ENCODE measurements at regions of chr3 and their contacts with region 1.

Region 1: GRCh38 chr3:187319699-187320302 is 28.3 kb upstream of the MASP1 start:
- DNase-seq: peak; percentile 72 to 94
- H3K4me3 ChIP-seq: no peak overlapping the region
- H3K27ac ChIP-seq: no peak overlapping the region
- H3K4me1 ChIP-seq: peaks cover 0 to 4% (median 2%) of the 10 kb centered on the region in 4 experiments; a peak in 4 of 7 replicates
- H3K27me3 ChIP-seq: no peaks in the 10 kb centered on the region; a peak in 1 of 7 replicates
- CTCF ChIP-seq: peak; percentile 76 to 97 (median 95)
- EP300 ChIP-seq: no peak
- POLR2A ChIP-seq: no peak
- RAD21 ChIP-seq: peak; percentile 99 to 100

Region 2: GRCh38 chr3:187227658-187228258 is 92.0 kb before region 1 on chr3:
- CTCF ChIA-PET with region 1: interaction called, 236 read pairs
- POLR2A ChIA-PET with region 1: no interaction called
- DNase-seq: no peak
- H3K4me3 ChIP-seq: no peak overlapping the region
- H3K27ac ChIP-seq: no peak overlapping the region
- H3K4me1 ChIP-seq: no peaks in the 10 kb centered on the region
- H3K27me3 ChIP-seq: no peaks in the 10 kb centered on the region
- CTCF ChIP-seq: no peak
- EP300 ChIP-seq: no peak
- POLR2A ChIP-seq: no peak
- RAD21 ChIP-seq: no peak

Region 3: GRCh38 chr3:187291512-187292132 is 28.2 kb before region 1 on chr3 and contains the start of gene MASP1:
- CTCF ChIA-PET with region 1: interaction called, 70 read pairs
- POLR2A ChIA-PET with region 1: no interaction called
- DNase-seq: no peak
- H3K4me3 ChIP-seq: peak within 1 kb of the TSS; percentile 39 to 66 (median 59)
- H3K27ac ChIP-seq: no peak within 1 kb of the TSS
- H3K4me1 ChIP-seq: peaks cover 3 to 16% (median 10%) of the 10 kb centered on the region in 4 experiments; a peak in 6 of 7 replicates
- H3K27me3 ChIP-seq: peaks cover 0 to 3% (median 0%) of the 10 kb centered on the region in 4 experiments; a peak in 3 of 7 replicates
- CTCF ChIP-seq: no peak
- EP300 ChIP-seq: no peak
- POLR2A ChIP-seq: no peak
- RAD21 ChIP-seq: 0 out of 4 replicates have a peak, but pooled peaks of 1 of the 2 experiments have one; percentile 8
- total RNA-seq, gene MASP1: 2.7 and 3.2 TPM in 2 replicates

Region 4: DNA sequence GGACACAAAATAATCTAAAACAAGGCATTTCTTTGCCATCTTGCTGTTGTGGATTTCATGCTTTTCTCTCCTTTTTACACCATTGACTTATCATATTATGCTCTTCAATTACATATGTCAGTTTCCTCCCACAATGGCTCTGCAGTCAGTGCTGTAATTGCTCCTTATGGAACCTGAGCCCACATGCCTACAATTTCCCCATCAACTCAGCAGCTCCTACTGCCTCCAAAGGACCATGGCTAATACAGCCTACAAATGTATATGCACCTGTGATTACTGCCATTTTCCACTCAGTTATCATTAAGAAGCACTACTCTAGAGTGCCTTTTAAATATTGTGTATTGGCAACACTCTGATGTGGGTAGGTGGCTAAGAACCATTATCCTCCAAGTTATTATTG is 79.2 kb after region 1 on chr3:
- CTCF ChIA-PET with region 1: interaction called, 13 read pairs
- POLR2A ChIA-PET with region 1: no interaction called
- DNase-seq: no peak
- H3K4me3 ChIP-seq: no peak overlapping the region
- H3K27ac ChIP-seq: no peak overlapping the region
- H3K4me1 ChIP-seq: no peaks in the 10 kb centered on the region
- H3K27me3 ChIP-seq: no peaks in the 10 kb centered on the region
- CTCF ChIP-seq: no peak
- EP300 ChIP-seq: no peak
- POLR2A ChIP-seq: no peak
- RAD21 ChIP-seq: no peak

Region 5: DNA sequence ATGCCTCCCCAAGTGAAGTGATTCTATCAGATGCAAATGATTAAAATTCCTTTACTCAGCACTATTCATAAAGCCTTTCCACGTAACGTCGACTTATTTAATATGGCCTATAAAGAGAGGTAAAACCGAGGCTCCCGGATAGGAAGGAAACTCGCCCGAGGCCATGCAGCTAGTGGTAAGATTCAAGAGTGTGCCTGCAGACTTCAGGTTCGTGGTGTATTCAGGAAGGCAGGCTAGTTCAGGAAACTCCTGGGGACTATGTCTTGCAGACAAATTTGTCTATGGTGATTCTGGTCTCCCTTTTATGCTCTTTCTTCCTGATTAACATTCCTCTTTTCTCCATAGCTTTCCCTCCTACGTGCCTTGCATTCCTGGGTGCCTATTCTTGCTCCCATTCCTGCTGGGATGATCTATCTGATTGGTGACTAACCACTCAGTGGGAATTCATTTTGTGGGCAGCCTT is 199.7 kb after region 1 on chr3:
- CTCF ChIA-PET with region 1: interaction called, 16 read pairs
- POLR2A ChIA-PET with region 1: no interaction called
- DNase-seq: peak; percentile 41 to 51
- H3K4me3 ChIP-seq: no peak overlapping the region
- H3K27ac ChIP-seq: no peak overlapping the region
- H3K4me1 ChIP-seq: peaks cover 2 to 16% (median 9%) of the 10 kb centered on the region in 4 experiments; a peak in 4 of 7 replicates
- H3K27me3 ChIP-seq: no peaks in the 10 kb centered on the region
- CTCF ChIP-seq: no peak
- EP300 ChIP-seq: 0 out of 3 replicates have a peak, but pooled peaks of 1 of the 2 experiments have one; percentile 12
- POLR2A ChIP-seq: no peak
- RAD21 ChIP-seq: no peak

Region 6: DNA sequence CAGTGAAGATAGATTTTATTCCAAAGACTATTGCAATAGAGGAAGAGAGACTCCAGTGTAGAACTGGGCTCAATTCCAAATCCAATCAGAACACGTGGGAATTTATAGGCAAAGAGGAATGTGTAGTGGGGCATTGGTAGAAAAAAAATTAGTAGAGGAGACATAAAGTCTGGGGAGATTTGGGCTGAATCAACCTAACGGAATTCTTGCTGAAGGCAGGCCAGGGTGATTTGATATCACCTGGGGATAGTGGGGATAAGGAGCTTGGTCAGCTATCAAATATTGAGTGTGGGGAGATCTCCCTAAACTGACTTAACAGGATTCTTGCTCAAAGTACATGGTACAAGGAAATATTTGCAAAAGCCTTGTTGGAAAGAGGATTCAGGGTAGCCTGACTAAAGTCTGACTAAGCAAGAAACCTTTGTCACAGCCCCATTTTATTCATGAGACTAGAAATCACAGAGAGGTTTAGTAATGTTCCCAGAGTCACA is 320.8 kb after region 1 on chr3:
- CTCF ChIA-PET with region 1: interaction called, 12 read pairs
- POLR2A ChIA-PET with region 1: no interaction called
- DNase-seq: no peak
- H3K4me3 ChIP-seq: no peak overlapping the region
- H3K27ac ChIP-seq: no peak overlapping the region
- H3K4me1 ChIP-seq: no peaks in the 10 kb centered on the region
- H3K27me3 ChIP-seq: no peaks in the 10 kb centered on the region
- CTCF ChIP-seq: no peak
- EP300 ChIP-seq: no peak
- POLR2A ChIP-seq: no peak
- RAD21 ChIP-seq: no peak

Region 7: DNA sequence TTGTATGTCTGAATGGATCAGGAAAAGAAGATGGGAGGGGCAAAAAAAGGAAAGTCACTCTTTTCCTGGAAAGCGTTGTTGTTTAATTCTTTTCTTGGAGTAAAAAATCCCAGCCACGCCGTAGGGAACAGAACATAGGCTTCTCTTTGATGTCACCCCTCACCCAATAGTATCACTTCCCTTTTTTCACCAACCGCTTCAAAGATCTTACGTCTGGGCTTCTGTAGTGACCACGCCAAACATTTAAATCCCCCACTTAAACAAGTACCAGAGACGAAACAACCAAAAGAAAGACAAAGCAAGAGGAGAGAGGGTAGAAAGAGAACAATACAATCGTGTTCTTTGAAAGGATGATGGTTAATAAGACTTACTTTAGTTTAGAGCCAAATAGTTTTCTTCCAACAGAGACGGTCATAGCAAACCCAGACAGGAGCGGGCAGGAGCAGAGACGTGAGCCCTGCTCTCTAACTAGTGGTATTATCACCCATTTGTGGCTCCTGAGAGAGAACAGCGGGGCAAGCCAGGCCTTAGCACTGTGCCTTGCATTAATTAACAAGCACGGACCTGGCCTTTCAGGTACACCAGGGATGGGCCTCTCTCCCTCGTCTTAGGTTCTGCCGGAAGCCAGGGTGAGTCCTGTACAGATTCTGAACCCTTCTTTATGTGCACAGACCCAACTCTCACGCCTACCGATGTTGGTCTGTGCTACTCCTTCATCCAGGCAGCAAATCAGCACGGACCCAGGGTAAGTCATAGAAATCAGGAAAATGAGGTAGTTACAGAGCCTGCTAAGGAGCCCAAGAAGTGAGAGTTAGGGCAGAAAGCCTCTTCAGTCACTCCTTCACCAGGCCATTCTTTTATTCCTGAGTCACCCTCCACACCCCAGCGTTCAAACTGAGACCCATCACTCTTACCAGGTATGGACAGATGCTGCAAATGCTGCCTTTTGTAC is 453.7 kb after region 1 on chr3:
- CTCF ChIA-PET with region 1: no interaction called
- POLR2A ChIA-PET with region 1: no interaction called
- DNase-seq: no peak
- H3K4me3 ChIP-seq: no peak overlapping the region
- H3K27ac ChIP-seq: no peak overlapping the region
- H3K4me1 ChIP-seq: peaks cover 0 to 7% (median 0%) of the 10 kb centered on the region in 4 experiments; a peak in 2 of 7 replicates
- H3K27me3 ChIP-seq: no peaks in the 10 kb centered on the region
- CTCF ChIP-seq: no peak
- EP300 ChIP-seq: no peak
- POLR2A ChIP-seq: no peak
- RAD21 ChIP-seq: no peak